Activated B cell treated with CpG ODN at 0.5 μM for 24 hours (primary cell): ENCODE measurements at regions of chr11 and their contacts with region 1.

Region 1: DNA sequence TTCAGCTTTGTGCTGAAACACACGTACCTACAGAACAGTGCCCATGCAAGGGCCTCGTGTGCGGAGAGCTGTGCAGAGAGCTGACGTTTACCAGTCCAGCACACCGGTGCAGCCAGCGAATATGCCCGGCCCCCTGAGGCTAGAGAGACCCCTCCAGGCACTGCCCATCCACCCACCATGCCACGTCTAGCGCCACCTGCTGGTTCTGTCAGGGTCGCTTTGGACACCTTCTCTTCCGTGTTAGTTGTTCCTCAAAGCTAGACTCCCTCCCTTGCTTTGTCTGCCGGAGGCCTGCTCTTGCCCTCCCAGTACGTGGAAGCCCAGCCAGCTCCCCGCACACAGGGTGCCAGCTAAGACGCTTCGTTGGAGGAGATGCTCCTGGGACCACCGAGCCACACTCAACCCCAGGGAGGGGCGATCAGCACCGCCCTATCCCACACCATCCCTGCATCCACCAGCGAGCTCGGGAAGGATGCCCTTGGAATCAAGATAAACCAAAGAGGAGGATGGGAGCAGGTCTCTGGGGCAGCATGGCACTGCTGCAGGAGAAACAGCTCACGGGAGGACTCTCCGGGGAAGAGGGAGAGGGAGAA is 43.4 kb downstream of the CPT1A start:
- DNase-seq: no peak
- ATAC-seq: peak; percentile 28
- H3K4me3 Mint-ChIP-seq: no peak overlapping the region
- H3K27ac Mint-ChIP-seq: no peak overlapping the region
- H3K4me1 Mint-ChIP-seq: no peaks in the 10 kb centered on the region
- H3K27me3 Mint-ChIP-seq: no peaks in the 10 kb centered on the region
- CTCF ChIP-seq: no peak

Region 2: DNA sequence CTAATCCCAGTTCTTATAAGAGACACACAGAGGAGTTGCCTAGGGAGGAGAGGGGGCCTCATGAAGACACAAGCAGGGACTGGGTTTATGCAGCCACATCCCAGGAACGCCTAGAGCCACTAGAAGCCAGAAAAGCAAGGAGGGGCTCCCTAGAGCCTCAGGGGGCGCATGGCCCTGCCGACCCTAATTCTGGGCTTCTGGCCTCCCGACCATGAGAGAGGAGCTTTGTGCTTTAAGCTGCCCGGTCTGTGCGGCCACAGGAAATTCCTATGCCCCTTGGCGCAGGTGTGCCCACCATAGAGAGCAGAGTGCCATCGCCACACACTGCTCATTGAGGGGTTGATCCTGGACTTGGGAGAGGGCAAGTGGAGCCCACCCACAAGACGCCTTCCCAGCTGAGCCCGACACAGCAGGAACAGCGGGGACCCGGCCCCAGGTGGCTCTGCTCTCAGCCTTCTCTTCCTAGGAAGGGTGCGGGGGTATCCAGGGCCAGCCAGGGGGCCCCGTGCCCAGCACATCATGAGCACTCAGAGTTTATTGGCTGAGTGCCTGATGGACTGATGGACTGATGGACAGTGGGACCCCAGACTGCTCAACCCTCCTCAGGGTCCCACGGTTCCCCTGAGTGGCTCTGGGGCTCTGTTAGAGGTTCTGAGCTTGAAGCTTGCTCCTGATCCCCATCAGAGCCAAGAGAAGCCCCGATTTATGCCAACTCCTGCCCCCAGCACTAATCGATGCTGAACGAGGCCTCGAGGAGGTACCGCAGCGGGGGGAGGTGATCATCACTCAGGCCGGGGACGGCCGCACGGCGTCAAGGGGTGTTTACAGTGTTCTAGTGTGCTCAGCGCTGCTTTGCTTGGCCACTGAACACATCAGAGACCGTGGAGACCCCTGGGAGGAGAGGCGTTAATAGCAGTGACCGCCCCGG is 195.9 kb after region 1 on chr11:
- CTCF ChIA-PET with region 1: no interaction called
- POLR2A ChIA-PET with region 1: interaction called, 11 read pairs
- intact Hi-C with region 1: no loop called
- DNase-seq: peak; percentile 7
- ATAC-seq: no peak
- H3K4me3 Mint-ChIP-seq: no peak overlapping the region
- H3K27ac Mint-ChIP-seq: no peak overlapping the region
- H3K4me1 Mint-ChIP-seq: no peaks in the 10 kb centered on the region
- H3K27me3 Mint-ChIP-seq: peaks cover 31% of the 10 kb centered on the region
- CTCF ChIP-seq: no peak

Region 3: DNA sequence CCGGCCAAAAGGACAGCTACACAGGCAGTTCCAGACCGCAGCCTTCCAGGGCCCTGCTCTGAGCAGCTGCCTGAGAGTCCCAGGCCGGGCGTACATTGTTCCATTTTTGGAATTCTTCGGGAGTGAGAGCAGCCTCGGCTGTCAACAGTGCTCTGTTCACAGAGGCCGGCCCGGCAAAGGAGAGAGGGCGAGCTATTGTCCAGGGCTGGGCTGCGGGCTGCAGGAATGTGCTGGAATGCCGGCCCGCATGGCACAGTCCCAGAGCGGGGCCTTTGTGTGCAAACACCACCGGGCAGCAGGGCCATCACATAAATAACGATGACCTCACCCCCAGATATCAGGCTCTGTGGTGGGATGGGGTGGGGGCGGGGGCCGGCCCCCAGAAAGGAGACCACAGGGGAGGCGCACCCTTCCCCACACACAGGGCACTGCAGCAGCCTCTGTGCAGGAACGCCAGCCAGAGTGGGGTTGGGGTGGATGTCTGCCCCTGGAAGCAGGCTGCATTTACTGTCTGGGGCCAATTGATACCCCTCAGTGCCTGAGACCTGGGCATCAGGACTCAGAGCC is 699.0 kb after region 1 on chr11:
- CTCF ChIA-PET with region 1: no interaction called
- POLR2A ChIA-PET with region 1: no interaction called
- intact Hi-C with region 1: no loop called
- DNase-seq: no peak
- ATAC-seq: no peak
- H3K4me3 Mint-ChIP-seq: no peak overlapping the region
- H3K27ac Mint-ChIP-seq: no peak overlapping the region
- H3K4me1 Mint-ChIP-seq: no peaks in the 10 kb centered on the region
- H3K27me3 Mint-ChIP-seq: peaks cover 6% of the 10 kb centered on the region
- CTCF ChIP-seq: no peak